CD8-positive, alpha-beta T cell (primary cell): ENCODE measurements at regions of chr1 and their contacts with region 1.

Region 1: DNA sequence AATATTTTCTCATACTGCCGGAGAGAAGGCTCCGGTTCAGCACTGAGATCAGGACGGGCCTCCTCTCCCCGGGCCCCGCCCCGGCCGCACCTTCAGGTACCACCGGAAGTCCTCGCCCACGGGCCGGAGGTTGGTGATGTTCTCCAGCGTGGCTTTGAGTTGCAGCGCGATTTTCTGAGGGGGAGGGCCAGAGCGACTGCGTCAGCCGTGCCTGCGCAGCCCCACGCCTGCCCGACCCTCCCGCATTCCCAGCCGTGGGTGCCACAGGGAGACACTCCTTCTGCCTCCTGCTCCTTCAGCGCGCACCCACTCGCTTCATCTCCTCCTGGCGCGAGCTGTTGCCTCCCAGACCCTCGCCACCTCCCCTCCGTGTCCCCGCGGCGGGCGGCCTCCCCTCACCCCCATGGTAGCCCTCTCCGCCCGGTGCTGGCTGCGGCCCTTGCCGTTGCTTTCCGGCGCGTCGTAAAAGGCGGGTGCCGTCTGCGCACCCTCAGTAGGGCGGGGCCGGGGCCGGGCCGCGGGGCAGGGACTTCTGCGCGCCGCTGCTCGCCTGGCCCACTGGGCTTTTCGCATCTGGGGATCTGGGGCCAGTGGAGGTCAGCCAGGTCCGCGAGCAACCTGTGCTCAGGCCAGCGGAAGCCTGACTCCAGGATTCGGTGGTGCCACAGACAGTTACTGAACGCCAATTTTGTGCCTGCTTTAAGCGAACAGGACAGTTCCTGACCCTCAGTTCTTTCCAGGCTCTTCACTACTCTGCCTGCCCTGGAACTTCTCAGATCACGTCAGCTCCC is at the start of gene CZIB:
- DNase-seq: peak; percentile 83 to 95 (median 92)
- ATAC-seq: peak; percentile 92
- H3K4me3 ChIP-seq: peak within 1 kb of the TSS; percentile 80 to 92
- H3K4me3 Mint-ChIP-seq: peak within 1 kb of the TSS; percentile 94
- H3K27ac ChIP-seq: peak within 1 kb of the TSS; percentile 94
- H3K27ac Mint-ChIP-seq: peak within 1 kb of the TSS; percentile 98
- H3K4me1 ChIP-seq: peaks cover 16% of the 10 kb centered on the region
- H3K4me1 Mint-ChIP-seq: peaks cover 18% of the 10 kb centered on the region
- H3K27me3 ChIP-seq: no peaks in the 10 kb centered on the region
- H3K27me3 Mint-ChIP-seq: no peaks in the 10 kb centered on the region
- CTCF ChIP-seq: no peak
- total RNA-seq, gene CZIB: 26.7 to 27.4 TPM

Region 2: DNA sequence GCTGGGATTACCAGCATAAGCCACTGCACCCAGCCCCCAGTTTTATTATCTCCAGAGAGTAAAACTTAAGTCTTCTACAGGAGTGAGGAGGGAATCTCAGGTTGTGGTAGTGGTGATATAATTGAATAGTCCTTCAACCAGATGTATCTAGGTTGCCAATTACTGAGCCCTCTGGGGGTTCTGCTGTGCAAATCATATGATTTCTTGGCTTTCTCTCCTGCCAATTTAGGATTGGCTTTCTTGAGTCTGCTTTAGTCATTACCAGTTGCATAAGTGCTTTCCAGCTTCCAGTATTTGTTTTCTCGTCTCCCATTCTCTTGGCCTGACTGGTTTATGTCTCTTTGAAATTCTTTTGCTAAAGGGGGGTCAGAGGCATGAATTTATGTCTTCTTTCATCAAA is 12.6 kb before region 1 on chr1:
- CTCF ChIA-PET with region 1: no interaction called
- POLR2A ChIA-PET with region 1: no interaction called
- intact Hi-C with region 1: no loop called
- DNase-seq: no peak
- ATAC-seq: no peak
- H3K4me3 ChIP-seq: no peak overlapping the region
- H3K4me3 Mint-ChIP-seq: no peak overlapping the region
- H3K27ac ChIP-seq: no peak overlapping the region
- H3K27ac Mint-ChIP-seq: no peak overlapping the region
- H3K4me1 ChIP-seq: no peaks in the 10 kb centered on the region
- H3K4me1 Mint-ChIP-seq: peaks cover 6% of the 10 kb centered on the region
- H3K27me3 ChIP-seq: no peaks in the 10 kb centered on the region
- H3K27me3 Mint-ChIP-seq: no peaks in the 10 kb centered on the region
- CTCF ChIP-seq: no peak

Region 3: GRCh38 chr1:53238197-53239155 is 18.1 kb after region 1 on chr1 and contains the start of gene MAGOH:
- CTCF ChIA-PET with region 1: no interaction called
- POLR2A ChIA-PET with region 1: no interaction called
- intact Hi-C with region 1: loop called (anchors 1 kb)
- DNase-seq: peak; percentile 87 to 97 (median 95)
- ATAC-seq: peak; percentile 97
- H3K4me3 ChIP-seq: peak within 1 kb of the TSS; percentile 94 to 100
- H3K4me3 Mint-ChIP-seq: peak within 1 kb of the TSS; percentile 97
- H3K27ac ChIP-seq: peak within 1 kb of the TSS; percentile 89 to 95
- H3K27ac Mint-ChIP-seq: peak within 1 kb of the TSS; percentile 96
- H3K4me1 ChIP-seq: peaks cover 17% of the 10 kb centered on the region
- H3K4me1 Mint-ChIP-seq: peaks cover 33% of the 10 kb centered on the region
- H3K27me3 ChIP-seq: no peaks in the 10 kb centered on the region
- H3K27me3 Mint-ChIP-seq: no peaks in the 10 kb centered on the region
- CTCF ChIP-seq: no peak
- total RNA-seq, gene MAGOH: 77.2 to 79.5 TPM